Mammary epithelial cell (primary cell): ENCODE measurements at regions of chr4 and their contacts with region 1.

Region 1: GRCh38 chr4:170198747-170199146 is 109.0 kb upstream of the AADAT start:
- DNase-seq: no peak
- H3K4me3 ChIP-seq: no peak overlapping the region
- H3K27ac ChIP-seq: no peak overlapping the region
- H3K4me1 ChIP-seq: no peaks in the 10 kb centered on the region
- H3K27me3 ChIP-seq: no peaks in the 10 kb centered on the region
- CTCF ChIP-seq: peak; percentile 45 to 62

Region 2: DNA sequence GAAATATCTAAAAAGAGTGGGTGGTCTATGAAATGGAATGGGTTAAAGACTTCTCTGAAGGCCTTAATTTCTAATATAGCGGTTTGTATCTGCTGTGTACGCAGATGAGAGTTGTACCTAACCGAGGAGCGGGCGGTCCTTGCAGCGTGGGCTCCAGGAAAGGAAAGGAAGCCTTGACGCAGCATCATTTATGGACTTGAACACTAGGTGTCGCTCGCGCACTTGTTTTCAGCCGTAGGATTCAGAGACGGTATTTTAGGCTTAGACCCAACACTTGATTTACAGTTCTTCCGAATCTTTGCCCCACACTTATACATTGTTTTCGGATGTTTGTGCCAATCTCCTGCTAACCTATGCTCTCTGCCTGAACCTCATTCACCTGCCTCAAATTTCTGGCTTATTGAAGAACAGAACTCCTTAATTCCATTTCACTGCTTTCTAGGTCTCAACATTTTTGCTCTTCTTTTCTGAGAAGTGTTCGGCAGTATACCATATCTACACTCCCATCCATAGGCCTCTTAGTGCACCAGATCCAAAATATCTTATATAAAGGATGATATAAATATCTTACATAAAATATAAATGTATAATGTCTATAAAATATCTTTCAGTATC is 60.1 kb before region 1 on chr4:
- CTCF ChIA-PET with region 1: no interaction called
- dilution Hi-C with region 1: no loop called
- in situ Hi-C with region 1: no loop called
- intact Hi-C with region 1: loop called (anchors 1 kb)
- DNase-seq: peak; percentile 63
- H3K4me3 ChIP-seq: no peak overlapping the region
- H3K27ac ChIP-seq: no peak overlapping the region
- H3K4me1 ChIP-seq: peaks cover 9% of the 10 kb centered on the region
- H3K27me3 ChIP-seq: no peaks in the 10 kb centered on the region
- CTCF ChIP-seq: peak; percentile 82 to 91

Region 3: GRCh38 chr4:170162416-170162815 is 36.3 kb before region 1 on chr4:
- CTCF ChIA-PET with region 1: no interaction called
- dilution Hi-C with region 1: no loop called
- in situ Hi-C with region 1: no loop called
- intact Hi-C with region 1: no loop called
- DNase-seq: no peak
- H3K4me3 ChIP-seq: no peak overlapping the region
- H3K27ac ChIP-seq: no peak overlapping the region
- H3K4me1 ChIP-seq: no peaks in the 10 kb centered on the region
- H3K27me3 ChIP-seq: no peaks in the 10 kb centered on the region
- CTCF ChIP-seq: no peak

Region 4: GRCh38 chr4:170242471-170242870 is 43.7 kb after region 1 on chr4:
- CTCF ChIA-PET with region 1: no interaction called
- dilution Hi-C with region 1: no loop called
- in situ Hi-C with region 1: no loop called
- intact Hi-C with region 1: loop called (anchors 5 kb)
- DNase-seq: peak; percentile 84
- H3K4me3 ChIP-seq: no peak overlapping the region
- H3K27ac ChIP-seq: peak overlapping the region; percentile 64
- H3K4me1 ChIP-seq: peaks cover 46% of the 10 kb centered on the region
- H3K27me3 ChIP-seq: no peaks in the 10 kb centered on the region
- CTCF ChIP-seq: no peak

Region 5: DNA sequence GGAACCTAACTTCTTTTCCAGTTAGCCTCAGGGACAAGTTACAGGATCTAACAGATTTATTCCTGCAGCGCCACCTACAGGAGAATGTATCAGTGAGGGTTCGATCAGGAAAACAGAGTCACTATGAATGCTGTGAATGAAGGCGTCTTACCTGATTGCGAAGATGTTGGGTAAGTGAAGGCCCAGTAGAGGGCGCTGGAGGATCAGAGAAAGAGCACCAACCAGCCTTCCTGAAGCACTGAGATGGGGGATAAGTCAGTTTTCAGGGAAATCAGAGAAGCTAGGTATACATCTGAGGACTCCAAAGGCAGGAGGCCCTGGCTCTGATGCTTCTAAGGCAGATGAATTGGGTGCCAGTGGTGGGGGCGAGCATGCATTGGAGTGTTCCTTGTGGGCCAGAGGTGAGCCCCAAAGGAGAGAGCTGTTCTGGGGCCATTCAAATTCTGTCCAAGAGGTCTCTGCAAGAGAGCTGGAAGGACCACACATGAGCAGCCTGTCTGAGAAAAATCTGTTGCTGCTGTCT is 60.9 kb after region 1 on chr4:
- CTCF ChIA-PET with region 1: interaction called, 16 read pairs
- dilution Hi-C with region 1: no loop called
- in situ Hi-C with region 1: loop called in 1 of 2 experiments (anchors 10 kb)
- intact Hi-C with region 1: loop called (anchors 1 kb)
- DNase-seq: peak; percentile 88
- H3K4me3 ChIP-seq: no peak overlapping the region
- H3K27ac ChIP-seq: no peak overlapping the region
- H3K4me1 ChIP-seq: no peaks in the 10 kb centered on the region
- H3K27me3 ChIP-seq: no peaks in the 10 kb centered on the region
- CTCF ChIP-seq: peak; percentile 97 to 98

Region 6: DNA sequence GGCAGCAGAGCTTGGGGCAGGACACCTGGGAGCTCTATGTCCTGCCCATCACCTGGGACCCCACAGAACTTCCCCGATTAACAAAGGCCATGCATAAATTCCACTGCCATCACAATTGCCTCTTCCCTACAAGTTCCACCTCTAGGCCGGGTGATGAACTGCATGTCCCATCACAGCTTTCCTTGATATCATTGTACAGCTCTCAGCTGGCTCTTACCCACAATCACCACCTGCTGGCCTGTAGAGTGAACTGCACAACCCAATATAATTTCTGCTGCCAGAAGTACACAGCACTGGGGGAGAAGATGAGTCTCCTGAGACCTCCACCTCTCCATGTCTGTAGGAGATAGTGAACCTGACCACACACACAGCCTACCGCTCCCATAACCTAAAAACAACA is 176.0 kb after region 1 on chr4:
- CTCF ChIA-PET with region 1: no interaction called
- dilution Hi-C with region 1: no loop called
- in situ Hi-C with region 1: no loop called
- intact Hi-C with region 1: loop called (anchors 2 kb)
- DNase-seq: peak; percentile 45
- H3K4me3 ChIP-seq: no peak overlapping the region
- H3K27ac ChIP-seq: no peak overlapping the region
- H3K4me1 ChIP-seq: no peaks in the 10 kb centered on the region
- H3K27me3 ChIP-seq: no peaks in the 10 kb centered on the region
- CTCF ChIP-seq: peak; percentile 67 to 88

Region 7: DNA sequence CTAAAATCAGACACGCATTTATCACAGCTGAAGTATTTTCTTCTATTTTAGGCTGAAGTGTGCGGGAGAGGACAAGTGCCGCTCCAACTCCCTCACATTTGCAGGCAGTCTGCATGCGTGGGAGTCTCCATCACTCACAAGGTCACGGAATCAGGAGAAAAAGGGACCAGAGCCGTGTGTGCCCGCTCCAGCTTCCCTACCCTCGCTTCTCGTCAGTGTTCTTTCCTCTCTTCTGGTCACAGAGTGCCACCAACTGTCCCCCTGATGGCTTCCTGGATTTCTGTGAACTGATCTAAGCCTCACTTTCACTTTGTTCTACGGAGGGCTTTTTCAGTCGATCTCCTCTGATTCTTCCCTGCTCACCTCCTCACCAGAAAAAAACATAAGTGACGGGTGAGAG is 298.4 kb after region 1 on chr4:
- CTCF ChIA-PET with region 1: no interaction called
- dilution Hi-C with region 1: no loop called
- in situ Hi-C with region 1: no loop called
- intact Hi-C with region 1: loop called (anchors 5 kb)
- DNase-seq: peak; percentile 9
- H3K4me3 ChIP-seq: peak overlapping the region; percentile 20 to 40 (median 32)
- H3K27ac ChIP-seq: no peak overlapping the region
- H3K4me1 ChIP-seq: no peaks in the 10 kb centered on the region
- H3K27me3 ChIP-seq: peaks cover 2% of the 10 kb centered on the region
- CTCF ChIP-seq: no peak

Region 8: DNA sequence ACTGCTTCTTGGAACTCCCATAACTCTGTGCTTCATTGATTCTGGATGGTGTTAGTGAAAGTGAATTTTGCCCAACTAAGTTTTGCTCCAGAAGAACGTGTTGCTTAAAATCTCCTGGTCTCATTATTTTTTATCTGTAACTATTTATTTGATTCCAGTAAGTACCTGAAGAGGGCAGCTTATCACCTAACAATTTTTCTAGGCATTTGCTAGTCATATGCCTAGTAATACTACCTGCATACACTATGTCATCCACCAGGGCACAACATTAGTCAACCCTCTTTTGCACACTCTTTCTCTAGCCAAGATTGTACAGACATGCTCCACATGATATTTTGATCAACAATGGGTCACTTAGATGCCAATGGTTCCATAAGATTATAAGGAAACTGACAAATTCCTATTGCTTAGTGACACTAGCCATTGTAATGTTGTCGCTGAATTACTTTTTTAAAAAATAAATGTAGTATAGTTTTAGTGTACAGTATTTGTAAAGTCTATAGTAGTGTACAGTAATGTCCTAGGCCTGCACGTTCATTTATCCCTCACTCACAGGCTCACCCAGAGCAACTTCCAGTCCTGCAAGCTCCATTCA is 390.9 kb after region 1 on chr4:
- CTCF ChIA-PET with region 1: no interaction called
- dilution Hi-C with region 1: no loop called
- in situ Hi-C with region 1: no loop called
- intact Hi-C with region 1: loop called (anchors 10 kb)
- DNase-seq: peak; percentile 54
- H3K4me3 ChIP-seq: no peak overlapping the region
- H3K27ac ChIP-seq: no peak overlapping the region
- H3K4me1 ChIP-seq: no peaks in the 10 kb centered on the region
- H3K27me3 ChIP-seq: no peaks in the 10 kb centered on the region
- CTCF ChIP-seq: peak; percentile 69 to 74